ENCODE measurements at regions of chr6 and their contacts with region 1.

Region 1: DNA sequence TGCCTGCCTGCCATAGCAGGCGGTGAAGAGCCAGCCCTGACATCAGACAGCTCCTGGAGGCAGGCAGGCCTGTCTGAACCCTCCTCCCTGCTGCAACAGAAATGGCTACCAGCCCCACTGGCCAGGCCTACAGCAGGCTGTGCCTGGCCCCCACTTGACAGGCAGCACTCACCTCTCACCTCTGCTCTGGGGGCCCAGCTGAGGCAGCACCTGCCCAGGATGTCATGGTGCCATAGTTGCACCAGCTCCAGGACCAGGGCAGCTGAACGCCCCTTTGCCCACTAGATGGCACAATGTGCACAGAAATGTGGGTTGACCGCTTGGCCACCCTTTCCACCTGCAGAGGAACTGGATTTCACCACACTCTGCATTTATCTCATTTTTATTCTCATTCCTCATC is 30.6 kb downstream of the MRPL14 start:
- DNase-seq: peak; percentile 78 to 88
- ATAC-seq: peak; percentile 88
- H3K4me3 ChIP-seq: no peak overlapping the region
- H3K27ac ChIP-seq: no peak overlapping the region
- H3K4me1 ChIP-seq: no peaks in the 10 kb centered on the region
- H3K27me3 ChIP-seq: no peaks in the 10 kb centered on the region

Region 2: GRCh38 chr6:44151348-44152108 is 54.9 kb after region 1 on chr6:
- intact Hi-C with region 1: loop called (anchors 1 kb)
- DNase-seq: peak; percentile 82 to 92
- ATAC-seq: peak; percentile 84
- H3K4me3 ChIP-seq: no peak overlapping the region
- H3K27ac ChIP-seq: no peak overlapping the region
- H3K4me1 ChIP-seq: no peaks in the 10 kb centered on the region
- H3K27me3 ChIP-seq: no peaks in the 10 kb centered on the region

Region 3: DNA sequence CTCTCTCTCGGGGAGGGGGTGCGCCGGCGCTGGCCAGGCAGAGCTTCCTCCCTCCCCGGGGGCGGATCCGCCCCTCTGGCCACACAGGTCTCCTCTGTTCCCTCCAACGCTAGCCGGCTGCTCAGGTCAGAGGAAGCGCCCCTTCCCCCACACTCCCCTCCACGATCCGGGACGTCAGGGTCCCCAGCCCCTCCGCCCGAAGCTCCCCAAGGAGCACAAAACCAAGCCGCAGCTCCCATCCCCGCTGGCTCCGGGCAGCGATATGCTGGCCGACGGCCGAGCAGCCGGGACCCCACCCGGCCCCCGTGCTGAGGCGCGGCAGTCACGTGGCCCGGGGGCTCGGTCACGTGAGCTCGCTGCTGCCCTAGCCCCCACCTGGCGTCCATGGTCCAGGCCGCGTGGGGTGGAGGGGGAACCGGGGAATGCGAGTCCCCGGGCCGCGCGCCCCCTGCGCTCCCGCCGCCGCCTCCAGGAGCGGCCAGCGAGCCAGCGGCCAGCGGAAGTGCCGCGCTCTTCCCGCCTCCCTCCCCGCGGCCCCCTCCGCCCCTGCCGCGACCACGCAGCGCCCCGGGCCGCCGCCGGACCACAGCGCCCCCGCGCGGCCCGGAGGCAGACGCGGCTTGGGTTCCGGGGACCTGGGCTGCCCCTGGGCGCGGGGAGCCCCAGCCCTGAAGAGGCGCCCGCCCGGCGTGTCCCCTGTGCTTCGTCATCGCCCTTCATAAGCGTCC is 160.6 kb after region 1 on chr6 and contains the start of gene SLC35B2:
- intact Hi-C with region 1: loop called in 1 of 2 experiments (anchors 5 kb)
- DNase-seq: peak; percentile 76 to 88
- ATAC-seq: peak; percentile 89
- H3K4me3 ChIP-seq: peak within 1 kb of the TSS; percentile 81 to 87
- H3K27ac ChIP-seq: peak within 1 kb of the TSS in 1 of 2 donors; percentile 48
- H3K4me1 ChIP-seq: peaks cover 0 to 2% of the 10 kb centered on the region in 2 donors
- H3K27me3 ChIP-seq: no peaks in the 10 kb centered on the region
- total RNA-seq, gene SLC35B2: 23.4 to 26.0 TPM

Region 4: DNA sequence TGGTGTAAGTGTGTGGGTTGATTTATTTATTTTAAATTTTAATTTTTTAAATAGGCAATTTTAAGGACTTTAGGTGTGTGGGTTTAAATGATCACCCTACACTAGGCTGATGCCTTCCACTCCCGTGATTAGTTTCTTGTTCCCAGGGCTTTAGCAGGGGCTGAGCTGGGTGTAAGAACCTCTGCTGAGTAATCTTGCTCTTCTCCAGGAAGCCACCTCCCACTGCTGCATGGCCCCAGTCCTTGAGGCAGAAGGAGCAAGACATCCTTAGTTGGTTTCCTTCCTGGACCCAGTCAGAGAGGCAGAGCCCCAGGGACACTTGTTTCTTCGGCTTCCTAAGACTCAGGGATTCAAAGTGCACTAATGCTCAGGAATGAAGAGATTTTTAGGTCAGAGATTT is 271.1 kb after region 1 on chr6:
- intact Hi-C with region 1: no loop called
- DNase-seq: no peak
- ATAC-seq: no peak
- H3K4me3 ChIP-seq: no peak overlapping the region
- H3K27ac ChIP-seq: no peak overlapping the region
- H3K4me1 ChIP-seq: no peaks in the 10 kb centered on the region
- H3K27me3 ChIP-seq: no peaks in the 10 kb centered on the region

Region 5: GRCh38 chr6:45049188-45049843 is 952.7 kb after region 1 on chr6:
- intact Hi-C with region 1: no loop called
- DNase-seq: no peak
- ATAC-seq: no peak
- H3K4me3 ChIP-seq: no peak overlapping the region
- H3K27ac ChIP-seq: no peak overlapping the region
- H3K4me1 ChIP-seq: no peaks in the 10 kb centered on the region
- H3K27me3 ChIP-seq: no peaks in the 10 kb centered on the region

Measured in aorta (tissue), 5 donors.